ENCODE measurements at regions of chr12 and their contacts with region 1.

Region 1: GRCh38 chr12:117857632-117858612 is 110.9 kb downstream of the KSR2 start:
- DNase-seq: peak; percentile 58
- H3K4me3 ChIP-seq: no peak overlapping the region
- H3K27ac ChIP-seq: no peak overlapping the region
- H3K4me1 ChIP-seq: no peaks in the 10 kb centered on the region
- H3K27me3 ChIP-seq: no peaks in the 10 kb centered on the region
- CTCF ChIP-seq: peak; percentile 61 to 72
- POLR2A ChIP-seq: no peak

Region 2: DNA sequence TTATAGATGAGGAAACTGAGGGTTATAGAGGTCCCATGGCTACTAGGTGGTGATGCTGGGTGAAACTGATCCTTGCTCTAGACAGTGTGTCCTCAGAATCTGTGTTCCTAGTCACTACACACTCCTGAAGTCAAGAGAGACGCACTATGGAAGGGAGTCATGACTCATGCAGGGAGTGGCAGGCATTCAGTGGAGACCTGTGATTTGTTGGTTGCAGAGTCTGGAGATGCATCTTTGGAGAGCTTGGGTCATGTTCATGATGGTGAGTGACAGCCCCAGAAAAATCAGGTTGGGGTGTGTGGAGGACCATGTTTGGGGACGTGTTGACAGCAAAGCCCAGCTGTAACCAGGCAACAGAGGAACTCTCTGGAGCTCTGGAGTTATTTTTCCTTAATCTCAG is 629.7 kb before region 1 on chr12:
- CTCF ChIA-PET with region 1: interaction called, 147 read pairs
- POLR2A ChIA-PET with region 1: no interaction called
- dilution Hi-C with region 1: no loop called
- intact Hi-C with region 1: no loop called
- DNase-seq: no peak
- H3K4me3 ChIP-seq: no peak overlapping the region
- H3K27ac ChIP-seq: no peak overlapping the region
- H3K4me1 ChIP-seq: no peaks in the 10 kb centered on the region
- H3K27me3 ChIP-seq: no peaks in the 10 kb centered on the region
- CTCF ChIP-seq: no peak
- POLR2A ChIP-seq: no peak

Region 3: GRCh38 chr12:117342682-117343081 is 515.2 kb before region 1 on chr12:
- CTCF ChIA-PET with region 1: interaction called, 11 read pairs
- POLR2A ChIA-PET with region 1: no interaction called
- dilution Hi-C with region 1: no loop called
- intact Hi-C with region 1: no loop called
- DNase-seq: no peak
- H3K4me3 ChIP-seq: no peak overlapping the region
- H3K27ac ChIP-seq: no peak overlapping the region
- H3K4me1 ChIP-seq: no peaks in the 10 kb centered on the region
- H3K27me3 ChIP-seq: no peaks in the 10 kb centered on the region
- CTCF ChIP-seq: no peak
- POLR2A ChIP-seq: no peak

Region 4: GRCh38 chr12:117869551-117869950 is 11.6 kb after region 1 on chr12:
- CTCF ChIA-PET with region 1: interaction called, 45 read pairs
- POLR2A ChIA-PET with region 1: no interaction called
- dilution Hi-C with region 1: no loop called
- intact Hi-C with region 1: no loop called
- DNase-seq: no peak
- H3K4me3 ChIP-seq: no peak overlapping the region
- H3K27ac ChIP-seq: no peak overlapping the region
- H3K4me1 ChIP-seq: no peaks in the 10 kb centered on the region
- H3K27me3 ChIP-seq: no peaks in the 10 kb centered on the region
- CTCF ChIP-seq: no peak
- POLR2A ChIP-seq: no peak

Measured in endothelial cell of umbilical vein (primary cell).